Mammary epithelial cell (primary cell): ENCODE measurements at regions of chr16 and their contacts with region 1.

Region 1: DNA sequence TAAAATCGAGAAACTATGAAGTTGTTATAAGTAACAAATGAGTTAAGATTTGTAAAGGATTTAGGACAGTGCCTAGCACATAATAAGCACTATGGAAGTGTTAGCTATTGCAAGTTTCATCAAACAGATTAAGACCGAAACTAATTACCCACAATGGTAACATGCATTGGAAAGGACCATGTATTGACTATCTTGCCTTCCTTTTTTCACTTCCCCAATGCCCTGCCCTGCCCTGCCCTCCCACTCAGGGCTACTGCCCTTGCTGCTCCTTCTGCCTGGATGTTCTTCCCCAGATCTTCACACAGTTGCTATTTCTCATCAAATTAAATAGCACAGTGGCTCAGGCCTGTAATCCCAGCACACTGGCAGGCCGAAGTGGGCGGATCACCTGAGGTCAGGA is 202.1 kb upstream of the PSMD7 start:
- DNase-seq: no peak
- H3K4me3 ChIP-seq: no peak overlapping the region
- H3K27ac ChIP-seq: no peak overlapping the region
- H3K4me1 ChIP-seq: no peaks in the 10 kb centered on the region
- H3K27me3 ChIP-seq: no peaks in the 10 kb centered on the region
- CTCF ChIP-seq: no peak

Region 2: GRCh38 chr16:74153773-74154172 is 59.3 kb after region 1 on chr16:
- CTCF ChIA-PET with region 1: no interaction called
- dilution Hi-C with region 1: loop called (anchors 5 kb)
- in situ Hi-C with region 1: no loop called
- intact Hi-C with region 1: no loop called
- DNase-seq: no peak
- H3K4me3 ChIP-seq: no peak overlapping the region
- H3K27ac ChIP-seq: no peak overlapping the region
- H3K4me1 ChIP-seq: no peaks in the 10 kb centered on the region
- H3K27me3 ChIP-seq: no peaks in the 10 kb centered on the region
- CTCF ChIP-seq: no peak